Endothelial cell of umbilical vein (primary cell): ENCODE measurements at regions of chr3 and their contacts with region 1.

Region 1: GRCh38 chr3:181567311-181568075 is 144.2 kb upstream of the SOX2 start:
- DNase-seq: no peak
- H3K4me3 ChIP-seq: no peak overlapping the region
- H3K27ac ChIP-seq: no peak overlapping the region
- H3K4me1 ChIP-seq: peaks cover 3% of the 10 kb centered on the region
- H3K27me3 ChIP-seq: no peaks in the 10 kb centered on the region
- CTCF ChIP-seq: no peak
- POLR2A ChIP-seq: no peak

Region 2: GRCh38 chr3:181326637-181327223 is 240.8 kb before region 1 on chr3:
- CTCF ChIA-PET with region 1: interaction called, 18 read pairs
- POLR2A ChIA-PET with region 1: no interaction called
- dilution Hi-C with region 1: no loop called
- intact Hi-C with region 1: loop called (anchors 2 kb)
- DNase-seq: peak; percentile 54
- H3K4me3 ChIP-seq: no peak overlapping the region
- H3K27ac ChIP-seq: no peak overlapping the region
- H3K4me1 ChIP-seq: no peaks in the 10 kb centered on the region
- H3K27me3 ChIP-seq: no peaks in the 10 kb centered on the region
- CTCF ChIP-seq: peak; percentile 54 to 58
- POLR2A ChIP-seq: no peak

Region 3: GRCh38 chr3:181578743-181579142 is 11.2 kb after region 1 on chr3:
- CTCF ChIA-PET with region 1: interaction called, 11 read pairs
- POLR2A ChIA-PET with region 1: no interaction called
- dilution Hi-C with region 1: no loop called
- intact Hi-C with region 1: loop called (anchors 2 kb)
- DNase-seq: no peak
- H3K4me3 ChIP-seq: no peak overlapping the region
- H3K27ac ChIP-seq: no peak overlapping the region
- H3K4me1 ChIP-seq: no peaks in the 10 kb centered on the region
- H3K27me3 ChIP-seq: no peaks in the 10 kb centered on the region
- CTCF ChIP-seq: no peak
- POLR2A ChIP-seq: no peak

Region 4: DNA sequence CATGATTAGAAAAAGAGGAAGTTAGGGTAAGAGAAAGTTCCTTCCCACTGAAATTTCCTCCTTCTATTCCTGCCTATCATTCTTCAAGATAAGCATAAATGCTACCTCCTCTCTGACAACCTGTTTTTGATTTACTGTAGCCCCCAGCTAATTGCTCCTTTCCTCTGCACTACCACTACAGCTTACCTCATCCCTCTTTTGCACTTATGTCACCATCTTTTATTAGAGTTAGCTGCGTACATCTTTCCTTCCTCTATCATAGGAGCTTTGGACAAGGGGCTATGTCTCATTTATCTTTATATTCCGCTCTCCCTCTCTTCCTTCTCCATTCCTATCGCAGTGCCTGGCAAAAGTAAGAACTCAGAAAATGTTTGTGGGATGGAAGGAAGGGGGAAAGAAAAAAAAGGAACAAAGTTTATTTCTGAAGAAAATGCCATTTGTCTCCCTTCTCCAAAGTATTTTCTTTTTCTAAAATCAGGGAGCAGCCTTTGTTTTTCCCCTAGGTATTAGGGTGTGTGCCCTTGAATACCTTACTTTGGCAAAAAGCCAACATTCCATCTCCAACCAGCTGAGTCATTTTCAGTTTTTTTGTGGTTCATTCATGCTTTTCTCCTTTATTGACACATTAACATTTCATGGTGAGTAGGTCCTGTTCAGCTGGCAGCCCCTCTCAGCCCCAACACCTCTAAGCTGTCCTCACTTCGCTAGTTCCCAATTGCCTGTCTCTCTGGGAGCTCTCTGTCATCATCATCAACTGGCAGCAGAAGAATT is 56.6 kb after region 1 on chr3:
- CTCF ChIA-PET with region 1: interaction called, 41 read pairs
- POLR2A ChIA-PET with region 1: no interaction called
- dilution Hi-C with region 1: no loop called
- intact Hi-C with region 1: no loop called
- DNase-seq: peak; percentile 81
- H3K4me3 ChIP-seq: peak overlapping the region in 1 of 3 experiments; percentile 26
- H3K27ac ChIP-seq: peak overlapping the region; percentile 88
- H3K4me1 ChIP-seq: peaks cover 42% of the 10 kb centered on the region
- H3K27me3 ChIP-seq: no peaks in the 10 kb centered on the region
- CTCF ChIP-seq: no peak
- POLR2A ChIP-seq: no peak

Region 5: GRCh38 chr3:181694805-181695660 is 127.5 kb after region 1 on chr3:
- CTCF ChIA-PET with region 1: interaction called, 483 read pairs
- POLR2A ChIA-PET with region 1: no interaction called
- dilution Hi-C with region 1: no loop called
- intact Hi-C with region 1: loop called (anchors 1 kb)
- DNase-seq: peak; percentile 66
- H3K4me3 ChIP-seq: peak overlapping the region; percentile 26 to 57 (median 37)
- H3K27ac ChIP-seq: peak overlapping the region; percentile 44
- H3K4me1 ChIP-seq: peaks cover 21% of the 10 kb centered on the region
- H3K27me3 ChIP-seq: no peaks in the 10 kb centered on the region
- CTCF ChIP-seq: peak; percentile 47 to 50
- POLR2A ChIP-seq: peak; percentile 32